AG04449 (cell line): ENCODE measurements at regions of chr2 and their contacts with region 1.

Region 1: GRCh38 chr2:48107326-48107925 is 201.1 kb upstream of the FBXO11 start:
- DNase-seq: no peak
- H3K4me3 ChIP-seq: 0 out of 2 replicates have a peak overlapping the region, but pooled peaks have one; percentile 1
- CTCF ChIP-seq: peak; percentile 16

Region 2: GRCh38 chr2:47906157-47907038 is 201.0 kb before region 1 on chr2 and contains the start of gene FBXO11:
- CTCF ChIA-PET with region 1: interaction called, 11 read pairs
- POLR2A ChIA-PET with region 1: interaction called, 6 read pairs
- DNase-seq: peak; percentile 95
- H3K4me3 ChIP-seq: peak within 1 kb of the TSS; percentile 79
- CTCF ChIP-seq: peak; percentile 64

Region 3: DNA sequence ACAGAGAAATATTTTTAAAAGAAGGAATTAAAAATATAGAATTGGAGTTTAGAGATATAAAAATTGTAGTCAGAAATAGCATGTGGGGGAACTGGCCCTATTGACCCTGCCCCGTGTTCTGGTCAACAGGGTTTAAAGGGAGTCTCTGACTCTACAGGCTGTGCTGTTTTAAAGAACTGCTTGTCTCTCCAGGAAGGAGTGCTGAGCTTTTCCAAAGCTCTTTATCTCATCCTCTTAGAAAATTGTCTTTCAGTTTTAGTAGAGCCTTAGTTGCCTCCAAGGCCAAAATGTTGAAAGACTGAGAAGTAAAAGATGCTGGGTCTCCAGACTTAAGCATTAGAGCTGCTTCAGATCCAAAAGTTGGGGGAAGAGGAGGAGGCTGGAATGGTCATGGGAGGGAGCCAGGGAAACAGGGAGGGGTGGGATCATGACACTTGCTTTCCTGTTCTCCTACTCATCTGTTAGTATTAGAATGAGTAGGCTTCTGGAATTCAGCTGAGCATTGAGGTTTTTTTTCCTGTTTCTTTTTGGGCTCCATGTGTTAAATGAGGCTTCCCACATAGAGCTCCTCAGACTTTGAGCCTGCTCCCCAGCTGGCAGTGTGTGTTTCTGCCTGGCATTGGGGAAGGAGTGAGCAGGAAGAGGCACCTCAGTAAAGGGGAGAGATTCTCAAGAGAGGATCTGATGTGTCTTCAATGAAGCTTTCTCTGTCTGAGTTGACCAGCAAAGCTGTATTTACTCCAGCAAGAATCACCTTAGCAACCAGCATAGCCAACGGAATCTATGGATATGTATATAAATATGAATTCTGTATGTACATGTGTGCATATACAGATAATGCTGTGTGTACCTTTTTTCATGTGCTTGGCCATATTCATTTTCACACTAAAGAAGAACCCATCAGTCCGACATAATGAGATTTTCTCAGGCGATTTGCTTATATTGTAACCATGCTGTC is 14.3 kb before region 1 on chr2:
- CTCF ChIA-PET with region 1: interaction called, 13 read pairs
- POLR2A ChIA-PET with region 1: interaction called, 5 read pairs
- DNase-seq: no peak
- H3K4me3 ChIP-seq: no peak overlapping the region
- CTCF ChIP-seq: no peak

Region 4: DNA sequence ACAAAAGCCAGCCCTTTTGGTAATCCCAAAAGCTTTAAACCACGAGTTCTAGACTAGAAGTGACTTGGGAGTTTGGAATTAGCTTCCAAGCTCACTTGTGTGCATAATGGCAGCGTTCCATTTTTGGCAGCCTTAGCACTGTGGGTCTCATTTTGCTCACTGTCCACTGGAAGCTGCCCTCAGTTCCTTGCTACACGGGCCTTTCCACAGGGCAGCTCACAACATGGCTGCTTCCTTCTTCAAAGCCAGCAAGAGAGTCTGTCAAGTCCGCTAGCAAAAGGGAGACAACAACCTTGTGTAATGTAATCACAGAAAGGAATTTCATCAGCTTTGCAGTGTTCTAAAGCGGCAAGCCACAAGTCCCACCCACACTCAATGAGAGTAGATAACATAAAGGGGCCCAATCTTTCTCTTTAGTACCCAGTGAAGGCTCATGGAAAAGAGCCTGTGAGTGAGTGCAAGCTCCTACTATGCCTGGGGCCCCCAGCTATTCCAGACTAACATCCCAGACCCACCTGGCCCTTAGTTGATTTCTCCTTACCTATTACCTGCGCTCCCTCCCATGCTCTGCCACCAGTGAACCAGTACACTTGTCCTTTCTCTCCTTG is 38.5 kb after region 1 on chr2:
- CTCF ChIA-PET with region 1: no interaction called
- POLR2A ChIA-PET with region 1: no interaction called
- DNase-seq: no peak
- H3K4me3 ChIP-seq: no peak overlapping the region
- CTCF ChIP-seq: no peak

Region 5: GRCh38 chr2:48265169-48266030 is 158.0 kb after region 1 on chr2:
- CTCF ChIA-PET with region 1: no interaction called
- POLR2A ChIA-PET with region 1: no interaction called
- DNase-seq: no peak
- H3K4me3 ChIP-seq: no peak overlapping the region
- CTCF ChIP-seq: no peak

Region 6: DNA sequence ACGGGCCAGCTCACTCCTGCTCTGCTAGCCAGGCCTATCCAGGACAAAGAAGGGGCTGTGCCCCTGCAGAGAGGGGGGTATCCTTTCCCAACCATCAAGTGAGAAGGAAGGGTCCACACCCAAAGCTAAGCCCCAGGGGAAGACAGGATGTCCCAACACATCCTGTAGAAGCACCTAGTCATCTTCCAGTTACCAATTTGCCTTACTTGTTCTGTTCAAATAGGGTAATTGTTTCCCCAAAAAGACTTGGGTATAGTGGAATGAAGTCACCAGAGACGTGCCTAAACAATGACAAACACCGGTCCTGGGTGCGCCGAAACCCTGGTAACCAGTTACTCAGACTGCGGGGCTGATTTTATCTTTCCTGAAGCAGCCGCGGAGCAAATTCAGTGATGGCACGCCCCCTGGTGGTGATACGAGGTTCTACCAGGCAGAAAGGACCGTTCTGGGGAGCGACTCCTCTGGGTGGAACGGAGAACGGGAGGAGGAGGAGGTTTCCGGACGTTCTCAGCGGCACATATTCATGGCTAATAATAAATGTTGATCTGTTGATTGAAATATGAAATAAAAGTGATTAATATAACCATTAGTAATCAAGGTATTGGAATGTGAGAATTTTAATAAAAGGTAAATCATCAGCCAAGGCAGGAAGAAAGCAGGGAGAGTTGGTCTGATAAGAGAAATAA is 313.2 kb after region 1 on chr2:
- CTCF ChIA-PET with region 1: interaction called, 113 read pairs
- POLR2A ChIA-PET with region 1: interaction called, 3 read pairs
- DNase-seq: peak; percentile 55
- H3K4me3 ChIP-seq: 0 out of 2 replicates have a peak overlapping the region, but pooled peaks have one; percentile 4
- CTCF ChIP-seq: peak; percentile 96

Region 7: GRCh38 chr2:48508461-48509124 is 401.2 kb after region 1 on chr2:
- CTCF ChIA-PET with region 1: no interaction called
- POLR2A ChIA-PET with region 1: no interaction called
- DNase-seq: no peak
- H3K4me3 ChIP-seq: no peak overlapping the region
- CTCF ChIP-seq: no peak